H1 (cell line): ENCODE measurements at regions of chr11 and their contacts with region 1.

Region 1: DNA sequence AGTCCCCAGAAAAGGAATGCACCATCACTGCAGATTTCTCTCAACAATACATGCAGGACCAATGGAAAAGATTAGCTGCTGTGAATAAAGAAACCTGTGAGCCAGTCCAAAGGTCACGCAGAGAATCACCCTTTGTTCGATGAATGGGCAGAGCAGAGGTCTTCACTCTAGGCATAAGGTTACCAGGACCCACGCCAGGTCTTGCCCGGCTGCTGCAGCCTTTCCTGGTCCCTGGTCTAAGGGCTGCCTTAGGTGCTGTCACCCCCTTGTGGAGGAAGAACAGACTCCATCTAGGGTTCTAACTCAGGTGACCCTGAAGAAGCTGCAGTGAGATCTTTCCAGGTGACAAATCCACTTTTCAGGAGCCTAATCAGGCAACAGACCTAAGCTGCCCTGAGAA is 29.0 kb upstream of the NAP1L4 start:
- DNase-seq: no peak
- H3K4me3 ChIP-seq: no peak overlapping the region
- H3K27ac ChIP-seq: no peak overlapping the region
- H3K4me1 ChIP-seq: no peaks in the 10 kb centered on the region
- H3K27me3 ChIP-seq: no peaks in the 10 kb centered on the region
- CTCF ChIP-seq: peak; percentile 57 to 82 (median 78)
- EP300 ChIP-seq: no peak
- POLR2A ChIP-seq: no peak; a peak in 1 of 3 replicates
- RAD21 ChIP-seq: peak; percentile 72 to 79

Region 2: DNA sequence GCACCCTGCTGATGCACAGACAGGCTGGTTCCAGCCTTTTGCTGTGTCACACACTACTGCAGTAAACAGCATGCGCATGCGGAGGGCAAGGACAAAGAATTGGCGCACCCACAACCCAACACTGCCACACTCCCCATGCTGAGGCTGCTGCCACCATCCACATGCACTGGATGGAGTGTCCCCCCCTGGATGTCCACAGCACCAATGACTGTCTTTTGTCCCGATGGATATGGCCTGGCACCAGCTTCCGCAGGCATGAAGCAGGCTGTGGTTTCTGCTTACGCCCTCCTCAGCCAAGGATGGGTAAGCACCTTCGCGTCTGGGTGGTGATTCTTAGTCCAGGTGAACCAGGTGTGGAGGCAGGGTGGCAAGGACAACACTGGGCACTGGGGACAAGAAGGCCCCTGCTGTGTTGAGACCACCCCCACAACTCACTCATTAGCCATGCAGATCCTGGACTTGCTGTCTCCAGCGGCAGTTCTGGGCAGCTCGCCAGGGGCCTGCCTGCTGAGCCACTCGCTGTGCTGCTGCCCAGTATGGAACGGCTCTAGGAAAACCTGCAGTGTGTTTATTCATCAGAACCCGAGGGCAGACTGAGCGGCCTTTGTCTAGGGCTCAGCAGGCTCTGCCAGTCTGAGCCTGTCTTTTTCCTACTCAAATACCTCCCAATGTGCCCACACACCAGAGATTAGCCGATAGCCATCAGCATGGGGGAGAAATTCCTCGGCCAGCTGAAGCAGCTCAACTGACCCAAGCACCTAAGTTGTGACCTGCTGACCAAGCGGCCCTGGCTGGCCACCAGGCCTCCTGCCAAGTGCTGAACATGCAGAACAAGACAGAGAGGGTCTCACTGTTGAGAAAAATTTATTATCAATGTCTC is 20.8 kb before region 1 on chr11:
- CTCF ChIA-PET with region 1: interaction called, 27 read pairs
- POLR2A ChIA-PET with region 1: interaction called, 4 read pairs
- DNase-seq: no peak
- H3K4me3 ChIP-seq: no peak overlapping the region
- H3K27ac ChIP-seq: peak overlapping the region; percentile 58; the same call in 1 of the 2 replicates
- H3K4me1 ChIP-seq: peaks cover 0 to 3% (median 0%) of the 10 kb centered on the region in 4 experiments; a peak in 2 of 7 replicates
- H3K27me3 ChIP-seq: no peaks in the 10 kb centered on the region
- CTCF ChIP-seq: no peak
- EP300 ChIP-seq: no peak
- POLR2A ChIP-seq: no peak
- RAD21 ChIP-seq: no peak

Region 3: DNA sequence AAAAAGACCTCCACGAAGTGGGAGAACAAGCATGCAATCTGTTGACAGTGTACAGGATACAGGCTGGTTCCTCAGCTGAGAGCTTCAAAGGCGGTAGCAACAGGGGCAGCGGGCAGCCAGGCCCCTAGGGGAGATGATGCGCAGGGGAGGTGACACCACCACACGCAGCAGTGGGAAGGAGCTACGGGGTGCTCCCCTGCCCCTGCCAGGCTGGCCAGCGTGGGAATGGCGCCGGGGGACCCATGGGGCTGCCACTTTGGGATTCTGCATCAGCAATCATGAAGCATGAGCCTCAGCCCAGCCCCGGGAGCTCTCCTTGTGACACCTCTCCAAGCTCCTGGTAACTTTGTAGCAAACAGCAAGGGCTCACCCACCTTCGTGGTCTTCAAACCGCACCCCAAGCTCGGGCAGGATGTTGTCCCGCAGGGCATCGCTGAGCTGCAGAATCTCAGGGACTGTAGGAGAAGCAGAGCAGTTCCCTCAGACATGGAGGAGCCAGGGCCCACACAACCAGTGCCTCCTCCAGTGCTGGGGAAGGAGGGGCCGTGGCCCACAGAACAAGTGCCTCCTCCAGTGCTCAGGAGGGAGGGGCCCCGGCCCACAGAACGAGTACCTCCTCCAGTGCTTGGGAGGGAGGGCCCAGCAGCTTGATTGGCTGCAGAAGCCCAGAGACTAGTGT is 14.5 kb before region 1 on chr11:
- CTCF ChIA-PET with region 1: interaction called, 13 read pairs
- POLR2A ChIA-PET with region 1: interaction called, 5 read pairs
- DNase-seq: no peak
- H3K4me3 ChIP-seq: no peak overlapping the region
- H3K27ac ChIP-seq: no peak overlapping the region
- H3K4me1 ChIP-seq: no peaks in the 10 kb centered on the region
- H3K27me3 ChIP-seq: no peaks in the 10 kb centered on the region
- CTCF ChIP-seq: no peak
- EP300 ChIP-seq: no peak
- POLR2A ChIP-seq: no peak
- RAD21 ChIP-seq: no peak

Region 4: DNA sequence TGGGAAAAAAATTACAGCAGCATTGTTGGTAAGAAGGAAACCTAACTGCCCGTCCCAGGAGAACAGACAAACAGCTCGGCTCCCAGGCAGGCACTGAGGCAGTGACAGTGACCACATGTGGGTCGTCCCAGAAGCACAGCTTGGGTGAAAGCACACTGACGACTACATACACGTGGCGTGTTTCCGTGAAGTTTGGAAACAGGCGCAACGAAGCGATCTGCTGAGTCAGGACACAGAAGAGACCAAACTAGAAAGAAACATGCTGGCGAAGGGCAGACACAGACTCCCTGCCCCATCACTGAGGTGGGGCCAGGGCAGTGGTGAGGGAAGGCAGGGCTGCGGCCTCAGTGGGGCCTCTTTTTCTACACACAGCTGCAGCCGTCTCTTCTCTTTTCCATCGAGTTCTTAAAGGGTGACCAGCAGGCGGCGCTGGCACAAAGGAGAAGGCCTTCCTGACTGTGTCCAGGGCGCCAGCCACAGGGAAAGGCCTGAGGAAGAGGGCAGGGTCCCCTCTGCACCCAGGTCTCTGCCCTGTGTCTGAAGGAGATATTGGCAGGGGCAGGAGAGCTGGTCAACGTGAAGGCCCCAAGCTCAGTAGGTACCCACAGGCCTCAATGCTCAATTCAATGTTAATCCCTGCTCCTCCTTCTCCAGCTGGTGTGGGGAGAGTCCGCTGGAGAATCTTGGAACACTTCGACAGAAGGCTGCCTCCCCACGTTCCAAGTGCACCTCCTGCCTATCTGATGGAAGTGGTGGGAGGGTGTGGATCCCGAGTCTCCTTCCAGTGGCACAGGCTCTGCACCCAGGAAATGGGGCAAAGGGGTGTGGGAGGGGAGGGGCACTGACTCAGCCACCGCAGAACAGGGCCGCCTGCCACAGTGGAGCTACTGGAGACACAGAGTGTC is 16.2 kb after region 1 on chr11:
- CTCF ChIA-PET with region 1: interaction called, 66 read pairs
- POLR2A ChIA-PET with region 1: interaction called, 9 read pairs
- DNase-seq: peak; percentile 43 to 90
- H3K4me3 ChIP-seq: no peak overlapping the region
- H3K27ac ChIP-seq: no peak overlapping the region
- H3K4me1 ChIP-seq: no peaks in the 10 kb centered on the region
- H3K27me3 ChIP-seq: no peaks in the 10 kb centered on the region
- CTCF ChIP-seq: peak; percentile 64 to 92 (median 85)
- EP300 ChIP-seq: no peak
- POLR2A ChIP-seq: no peak
- RAD21 ChIP-seq: peak; percentile 87 to 89

Region 5: GRCh38 chr11:3086114-3086513 is 65.0 kb after region 1 on chr11:
- CTCF ChIA-PET with region 1: interaction called, 14 read pairs
- POLR2A ChIA-PET with region 1: no interaction called
- DNase-seq: no peak
- H3K4me3 ChIP-seq: no peak overlapping the region
- H3K27ac ChIP-seq: no peak overlapping the region
- H3K4me1 ChIP-seq: no peaks in the 10 kb centered on the region
- H3K27me3 ChIP-seq: no peaks in the 10 kb centered on the region
- CTCF ChIP-seq: no peak
- EP300 ChIP-seq: no peak
- POLR2A ChIP-seq: no peak
- RAD21 ChIP-seq: no peak

Region 6: DNA sequence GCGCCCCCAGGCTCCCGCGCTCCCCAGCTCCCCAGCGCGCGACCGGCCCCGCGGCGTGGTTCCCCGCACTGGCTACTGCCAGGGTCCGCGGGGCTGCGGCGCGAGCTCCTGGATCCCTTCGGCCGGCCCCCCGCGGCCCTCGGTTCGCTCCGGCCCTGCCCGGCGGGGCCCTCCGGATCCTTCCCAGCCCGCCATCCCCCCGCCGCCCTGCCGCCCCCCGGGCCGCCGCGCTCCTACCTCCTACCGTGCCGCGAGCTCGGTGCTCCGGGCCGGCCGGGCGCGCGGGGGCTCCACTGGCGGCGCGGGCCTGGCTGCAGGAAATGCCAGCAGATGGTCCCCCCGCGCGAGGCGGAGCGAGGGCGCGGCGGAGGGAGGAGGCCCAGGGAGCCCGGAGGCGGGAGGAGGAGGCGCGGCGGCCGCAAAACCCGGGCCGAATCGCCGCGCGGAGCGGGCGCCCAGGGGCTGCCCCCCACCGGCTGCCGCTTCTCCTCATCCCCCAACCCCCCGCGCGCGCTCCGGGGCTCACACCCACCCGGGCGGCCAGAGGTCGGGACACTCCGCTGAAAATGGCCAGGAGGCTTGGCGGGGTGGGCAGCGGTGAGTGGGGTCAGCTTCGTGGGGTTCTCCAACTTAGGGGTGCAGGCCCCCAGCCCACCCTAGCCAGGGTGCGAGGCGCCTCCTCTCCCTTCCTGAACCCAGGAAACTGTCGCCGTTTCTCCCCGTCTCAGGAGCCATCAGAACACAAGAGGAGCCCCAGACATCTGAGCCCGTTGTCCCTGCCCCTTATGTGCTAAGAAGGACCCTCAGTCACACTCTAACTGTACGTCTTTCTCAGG is 144.1 kb after region 1 on chr11 and contains the start of gene OSBPL5:
- CTCF ChIA-PET with region 1: no interaction called
- POLR2A ChIA-PET with region 1: no interaction called
- DNase-seq: no peak
- H3K4me3 ChIP-seq: peak within 1 kb of the TSS; percentile 49 to 68 (median 54)
- H3K27ac ChIP-seq: no peak within 1 kb of the TSS
- H3K4me1 ChIP-seq: peaks cover 5 to 35% (median 22%) of the 10 kb centered on the region in 4 experiments
- H3K27me3 ChIP-seq: peaks cover 0 to 46% (median 21%) of the 10 kb centered on the region in 4 experiments; a peak in 6 of 7 replicates
- CTCF ChIP-seq: no peak
- EP300 ChIP-seq: no peak
- POLR2A ChIP-seq: no peak
- RAD21 ChIP-seq: no peak
- total RNA-seq, gene OSBPL5: 7.9 and 9.9 TPM in 2 replicates